ENCODE measurements at regions of chr1 and their contacts with region 1.

Region 1: GRCh38 chr1:27154991-27155781 is at the start of gene SLC9A1:
- DNase-seq: peak; percentile 91
- H3K4me3 Mint-ChIP-seq: peak within 1 kb of the TSS; percentile 95
- H3K27ac Mint-ChIP-seq: peak within 1 kb of the TSS; percentile 96
- H3K4me1 Mint-ChIP-seq: peaks cover 42% of the 10 kb centered on the region
- H3K27me3 Mint-ChIP-seq: no peaks in the 10 kb centered on the region
- total RNA-seq, gene SLC9A1: 23.7 and 27.2 TPM in 2 replicates

Region 2: GRCh38 chr1:26555550-26556510 is 599.4 kb before region 1 on chr1:
- intact Hi-C with region 1: no loop called
- DNase-seq: no peak
- H3K4me3 Mint-ChIP-seq: no peak overlapping the region
- H3K27ac Mint-ChIP-seq: peak overlapping the region; percentile 40
- H3K4me1 Mint-ChIP-seq: peaks cover 18% of the 10 kb centered on the region
- H3K27me3 Mint-ChIP-seq: no peaks in the 10 kb centered on the region

Region 3: GRCh38 chr1:27111626-27112573 is 43.3 kb before region 1 on chr1:
- intact Hi-C with region 1: loop called (anchors 2 kb)
- DNase-seq: peak; percentile 55
- H3K4me3 Mint-ChIP-seq: no peak overlapping the region
- H3K27ac Mint-ChIP-seq: peak overlapping the region; percentile 85
- H3K4me1 Mint-ChIP-seq: peaks cover 40% of the 10 kb centered on the region
- H3K27me3 Mint-ChIP-seq: no peaks in the 10 kb centered on the region

Region 4: DNA sequence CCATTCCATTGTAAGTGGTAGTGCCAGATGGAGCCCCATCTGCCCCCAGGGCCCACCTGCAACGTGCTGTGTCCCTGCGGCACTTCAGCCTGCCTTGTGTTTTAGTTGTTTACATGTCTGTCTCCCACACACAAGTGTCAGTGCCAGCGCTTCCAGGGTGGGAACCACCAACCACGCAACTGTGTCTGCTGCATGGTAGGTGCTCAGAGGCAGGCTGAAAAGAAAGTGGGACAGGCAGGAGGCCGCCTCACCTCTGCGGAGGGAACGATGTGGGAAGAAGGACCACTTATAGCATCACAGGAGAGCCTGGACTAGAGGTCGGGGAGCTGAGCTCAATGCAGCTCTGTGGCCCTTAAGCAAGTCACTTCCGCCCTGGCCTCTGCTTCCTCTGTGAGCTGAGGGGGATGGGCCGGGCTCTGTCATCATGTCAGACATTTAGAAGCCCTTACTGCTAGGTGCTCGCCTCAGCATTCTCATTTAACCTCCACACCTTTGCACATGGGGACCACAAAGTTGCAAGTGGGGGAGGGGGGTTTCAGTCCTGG is 18.1 kb before region 1 on chr1:
- intact Hi-C with region 1: loop called (anchors 1 kb)
- DNase-seq: peak; percentile 70
- H3K4me3 Mint-ChIP-seq: peak overlapping the region; percentile 81
- H3K27ac Mint-ChIP-seq: peak overlapping the region; percentile 99
- H3K4me1 Mint-ChIP-seq: peaks cover 32% of the 10 kb centered on the region
- H3K27me3 Mint-ChIP-seq: no peaks in the 10 kb centered on the region

Region 5: GRCh38 chr1:27218736-27219135 is 63.5 kb after region 1 on chr1:
- intact Hi-C with region 1: no loop called
- DNase-seq: no peak
- H3K4me3 Mint-ChIP-seq: no peak overlapping the region
- H3K27ac Mint-ChIP-seq: no peak overlapping the region
- H3K4me1 Mint-ChIP-seq: no peaks in the 10 kb centered on the region
- H3K27me3 Mint-ChIP-seq: peaks cover 5% of the 10 kb centered on the region

Measured in activated T-helper 2 cell treated with anti-CD3 and anti-CD28 coated beads, Interferon-gamma antibody, Interleukin-2, Interleukin-4, amounts not matched to agents 10 μg/mL and 5 μg/mL and 100 μg/mL, durations not matched to agents 14 hours and 24 hours and 36 hours (primary cell).